Mammary epithelial cell (primary cell): ENCODE measurements at regions of chr5 and their contacts with region 1.

Region 1: GRCh38 chr5:5492087-5492933 is 69.8 kb downstream of the ICE1 start:
- DNase-seq: peak; percentile 37
- H3K4me3 ChIP-seq: no peak overlapping the region
- H3K27ac ChIP-seq: no peak overlapping the region
- H3K4me1 ChIP-seq: peaks cover 3% of the 10 kb centered on the region
- H3K27me3 ChIP-seq: no peaks in the 10 kb centered on the region
- CTCF ChIP-seq: peak; percentile 65 to 72

Region 2: DNA sequence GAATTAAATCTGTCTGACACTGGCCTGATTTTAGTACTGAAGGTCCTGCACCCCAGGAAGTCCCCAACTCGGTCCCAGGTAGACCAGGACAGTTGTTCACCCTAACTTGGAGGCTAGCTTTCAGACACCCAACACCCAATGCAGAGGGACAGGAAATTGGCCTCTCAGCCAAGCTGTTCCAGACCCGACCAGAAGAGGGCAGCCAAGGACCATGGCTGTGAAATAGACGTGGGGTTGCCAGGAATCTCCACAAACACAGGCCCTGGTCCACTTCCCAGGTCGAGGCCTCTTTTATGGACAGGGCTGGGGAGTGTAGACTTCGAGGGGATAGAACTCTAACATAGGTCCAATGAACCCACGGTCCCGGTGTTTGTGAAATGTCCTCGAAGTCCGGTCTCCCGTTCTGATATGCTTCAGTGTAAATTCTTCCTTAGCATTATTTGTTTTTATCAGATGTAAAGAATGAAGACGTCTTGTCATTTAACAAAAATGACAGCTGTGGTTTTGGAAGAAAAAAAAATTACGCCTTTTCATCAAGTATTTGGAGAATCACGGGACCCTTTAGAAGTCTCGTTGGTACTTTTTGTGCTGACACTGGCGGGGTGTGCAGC is 612.5 kb before region 1 on chr5:
- CTCF ChIA-PET with region 1: no interaction called
- dilution Hi-C with region 1: no loop called
- in situ Hi-C with region 1: no loop called
- intact Hi-C with region 1: loop called (anchors 1 kb)
- DNase-seq: peak; percentile 43
- H3K4me3 ChIP-seq: no peak overlapping the region
- H3K27ac ChIP-seq: no peak overlapping the region
- H3K4me1 ChIP-seq: no peaks in the 10 kb centered on the region
- H3K27me3 ChIP-seq: no peaks in the 10 kb centered on the region
- CTCF ChIP-seq: peak; percentile 96 to 98

Region 3: GRCh38 chr5:5473224-5473623 is 19.1 kb before region 1 on chr5:
- CTCF ChIA-PET with region 1: no interaction called
- dilution Hi-C with region 1: no loop called
- in situ Hi-C with region 1: no loop called
- intact Hi-C with region 1: no loop called
- DNase-seq: peak; percentile 32
- H3K4me3 ChIP-seq: no peak overlapping the region
- H3K27ac ChIP-seq: no peak overlapping the region
- H3K4me1 ChIP-seq: no peaks in the 10 kb centered on the region
- H3K27me3 ChIP-seq: no peaks in the 10 kb centered on the region
- CTCF ChIP-seq: no peak

Region 4: DNA sequence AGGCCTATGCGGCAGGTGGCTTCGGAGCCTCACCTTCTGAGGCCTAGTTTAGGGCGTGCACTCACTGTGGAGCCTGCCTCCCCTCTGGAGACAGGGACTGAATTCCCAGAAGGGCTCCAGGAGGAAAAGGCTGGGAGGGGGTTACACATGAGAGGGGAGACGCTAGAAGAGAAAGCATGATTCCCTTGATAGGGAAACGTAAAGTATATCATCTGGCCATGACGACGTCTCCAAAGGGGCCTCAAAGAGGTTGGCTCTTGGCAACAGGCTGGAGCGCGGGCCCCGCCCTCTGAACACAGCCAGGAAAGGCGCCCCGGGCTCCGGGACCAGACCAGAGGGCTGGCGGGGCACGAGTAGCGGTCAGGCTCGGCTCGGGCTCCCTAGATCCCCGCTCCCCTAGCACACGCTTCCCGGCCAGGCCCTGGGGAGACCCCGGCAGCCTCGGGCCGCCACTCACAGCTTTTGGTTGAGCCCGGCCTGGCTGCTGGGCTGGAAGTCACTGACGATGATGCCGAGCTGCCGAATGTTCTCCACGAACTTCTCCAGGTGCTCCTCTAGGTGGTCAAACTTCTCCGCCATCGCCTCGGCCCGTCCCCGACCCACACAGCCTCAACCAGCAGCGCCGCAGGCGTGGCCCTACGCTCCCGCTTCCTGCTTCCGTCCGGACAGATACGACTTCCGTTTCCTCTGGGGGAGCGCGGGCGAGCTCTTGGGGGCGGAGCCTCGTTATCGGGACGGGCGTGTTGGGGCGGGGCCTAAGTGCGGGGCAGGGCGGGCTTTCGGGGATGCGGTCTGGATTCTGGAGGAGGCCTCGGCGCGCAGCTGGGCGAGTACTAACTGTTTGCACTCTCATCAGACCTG is 885.8 kb after region 1 on chr5 and contains the start of gene MED10:
- CTCF ChIA-PET with region 1: no interaction called
- dilution Hi-C with region 1: no loop called
- in situ Hi-C with region 1: no loop called
- intact Hi-C with region 1: loop called (anchors 5 kb)
- DNase-seq: peak; percentile 88
- H3K4me3 ChIP-seq: peak within 1 kb of the TSS; percentile 80 to 95 (median 91)
- H3K27ac ChIP-seq: peak within 1 kb of the TSS; percentile 74
- H3K4me1 ChIP-seq: peaks cover 13% of the 10 kb centered on the region
- H3K27me3 ChIP-seq: no peaks in the 10 kb centered on the region
- CTCF ChIP-seq: no peak
- total RNA-seq, gene MED10: 17.0 to 59.5 TPM

Region 5: GRCh38 chr5:6576861-6577501 is 1084.7 kb after region 1 on chr5:
- CTCF ChIA-PET with region 1: no interaction called
- dilution Hi-C with region 1: loop called (anchors 10 kb)
- in situ Hi-C with region 1: loop called in 1 of 2 experiments (anchors 25 kb)
- intact Hi-C with region 1: loop called (anchors 1 kb)
- DNase-seq: peak; percentile 40
- H3K4me3 ChIP-seq: no peak overlapping the region
- H3K27ac ChIP-seq: no peak overlapping the region
- H3K4me1 ChIP-seq: no peaks in the 10 kb centered on the region
- H3K27me3 ChIP-seq: no peaks in the 10 kb centered on the region
- CTCF ChIP-seq: peak; percentile 56 to 74

Region 6: DNA sequence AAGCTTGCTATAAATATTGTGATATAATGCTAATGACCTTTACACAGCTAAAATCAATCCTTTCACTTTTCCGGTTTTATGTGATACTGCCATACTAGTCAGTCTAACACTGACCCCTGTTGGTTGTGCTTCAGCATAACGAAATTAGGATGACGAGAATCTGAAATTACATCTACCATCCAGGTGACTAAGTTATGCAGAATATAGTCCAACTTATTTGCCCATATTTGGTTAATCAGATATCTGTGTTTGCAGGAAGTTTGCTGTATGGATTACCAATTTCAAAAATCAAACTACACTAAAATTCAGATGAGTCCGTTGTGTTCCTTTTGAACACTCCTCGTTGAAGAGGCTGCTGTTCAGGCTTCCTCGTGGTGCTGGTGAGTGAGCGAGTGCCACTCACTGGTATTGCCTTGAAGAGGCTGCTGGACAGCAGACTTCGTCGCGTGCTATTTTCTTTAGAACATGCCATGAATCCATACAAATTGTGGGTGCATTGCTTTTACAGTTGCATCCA is 1253.5 kb after region 1 on chr5:
- CTCF ChIA-PET with region 1: no interaction called
- dilution Hi-C with region 1: no loop called
- in situ Hi-C with region 1: loop called (anchors 25 kb)
- intact Hi-C with region 1: loop called (anchors 10 kb)
- DNase-seq: peak; percentile 44
- H3K4me3 ChIP-seq: no peak overlapping the region
- H3K27ac ChIP-seq: no peak overlapping the region
- H3K4me1 ChIP-seq: no peaks in the 10 kb centered on the region
- H3K27me3 ChIP-seq: no peaks in the 10 kb centered on the region
- CTCF ChIP-seq: peak; percentile 77 to 79